Activated T-helper 2 cell treated with anti-CD3 and anti-CD28 coated beads, Interferon-gamma antibody, Interleukin-2, Interleukin-4, amounts not matched to agents 10 μg/mL and 5 μg/mL and 100 μg/mL, durations not matched to agents 14 hours and 24 hours and 36 hours (primary cell): ENCODE measurements at regions of chr7 and their contacts with region 1.

Region 1: GRCh38 chr7:99380032-99380822 is 5.7 kb downstream of the ARPC1B start:
- DNase-seq: no peak
- H3K4me3 Mint-ChIP-seq: peak overlapping the region; percentile 82
- H3K27ac Mint-ChIP-seq: peak overlapping the region; percentile 90
- H3K4me1 Mint-ChIP-seq: peaks cover 40% of the 10 kb centered on the region
- H3K27me3 Mint-ChIP-seq: no peaks in the 10 kb centered on the region

Region 2: DNA sequence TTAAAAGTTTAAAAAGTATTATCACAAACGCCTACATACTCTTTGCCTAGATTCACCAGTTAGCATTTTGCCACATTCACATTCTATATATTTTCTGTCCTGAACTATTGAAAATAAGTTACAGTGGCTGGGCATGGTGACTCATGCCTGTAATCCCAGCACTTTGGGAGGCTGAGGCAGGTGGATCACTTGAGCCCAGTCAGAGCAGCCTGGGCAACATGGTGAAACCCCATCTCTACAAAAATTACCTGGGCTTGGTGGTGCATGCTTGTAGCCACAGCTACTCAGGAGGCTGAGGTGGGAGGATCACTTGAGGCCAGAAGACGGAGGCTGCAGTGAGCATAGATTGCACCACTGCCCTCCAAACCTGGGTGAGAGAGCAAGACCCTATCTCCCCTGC is 49.2 kb before region 1 on chr7:
- intact Hi-C with region 1: loop called (anchors 2 kb)
- DNase-seq: no peak
- H3K4me3 Mint-ChIP-seq: no peak overlapping the region
- H3K27ac Mint-ChIP-seq: peak overlapping the region; percentile 91
- H3K4me1 Mint-ChIP-seq: peaks cover 43% of the 10 kb centered on the region
- H3K27me3 Mint-ChIP-seq: no peaks in the 10 kb centered on the region

Region 3: GRCh38 chr7:99438573-99439480 is 58.6 kb after region 1 on chr7 and contains the starts of genes CPSF4 and PTCD1:
- intact Hi-C with region 1: loop called (anchors 2 kb)
- DNase-seq: peak; percentile 88
- H3K4me3 Mint-ChIP-seq: peak within 1 kb of the TSS; percentile 99
- H3K27ac Mint-ChIP-seq: peak within 1 kb of the TSS; percentile 92
- H3K4me1 Mint-ChIP-seq: peaks cover 24% of the 10 kb centered on the region
- H3K27me3 Mint-ChIP-seq: no peaks in the 10 kb centered on the region
- total RNA-seq, gene CPSF4: 88.4 and 89.9 TPM in 2 replicates
- total RNA-seq, gene PTCD1: 8.1 and 10.4 TPM in 2 replicates